PC-9 (cell line): ENCODE measurements at regions of chr22 and their contacts with region 1.

Region 1: GRCh38 chr22:36585841-36586240 is 56.9 kb upstream of the EIF3D start:
- DNase-seq: peak; percentile 76 to 81
- H3K4me3 ChIP-seq: no peak overlapping the region
- H3K27ac ChIP-seq: peak overlapping the region; percentile 16
- H3K4me1 ChIP-seq: peaks cover 19% of the 10 kb centered on the region
- H3K27me3 ChIP-seq: peaks cover 20% of the 10 kb centered on the region
- CTCF ChIP-seq: no peak

Region 2: GRCh38 chr22:36221799-36222751 is 363.8 kb before region 1 on chr22:
- CTCF ChIA-PET with region 1: no interaction called
- POLR2A ChIA-PET with region 1: no interaction called
- intact Hi-C with region 1: no loop called
- DNase-seq: peak in 1 of 2 experiments; percentile 52
- H3K4me3 ChIP-seq: no peak overlapping the region
- H3K27ac ChIP-seq: no peak overlapping the region
- H3K4me1 ChIP-seq: no peaks in the 10 kb centered on the region
- H3K27me3 ChIP-seq: no peaks in the 10 kb centered on the region; the same call in 1 of the 2 replicates
- CTCF ChIP-seq: peak; percentile 74

Region 3: GRCh38 chr22:36552289-36552688 is 33.6 kb before region 1 on chr22:
- CTCF ChIA-PET with region 1: interaction called, 11 read pairs
- POLR2A ChIA-PET with region 1: interaction called, 3 read pairs
- intact Hi-C with region 1: loop called (anchors 1 kb)
- DNase-seq: no peak
- H3K4me3 ChIP-seq: no peak overlapping the region
- H3K27ac ChIP-seq: no peak overlapping the region
- H3K4me1 ChIP-seq: peaks cover 4% of the 10 kb centered on the region
- H3K27me3 ChIP-seq: peaks cover 20% of the 10 kb centered on the region
- CTCF ChIP-seq: no peak

Region 4: GRCh38 chr22:36619797-36620399 is 34.1 kb after region 1 on chr22:
- CTCF ChIA-PET with region 1: no interaction called
- POLR2A ChIA-PET with region 1: no interaction called
- intact Hi-C with region 1: no loop called
- DNase-seq: no peak
- H3K4me3 ChIP-seq: no peak overlapping the region
- H3K27ac ChIP-seq: no peak overlapping the region
- H3K4me1 ChIP-seq: no peaks in the 10 kb centered on the region
- H3K27me3 ChIP-seq: peaks cover 94% of the 10 kb centered on the region
- CTCF ChIP-seq: no peak

Region 5: DNA sequence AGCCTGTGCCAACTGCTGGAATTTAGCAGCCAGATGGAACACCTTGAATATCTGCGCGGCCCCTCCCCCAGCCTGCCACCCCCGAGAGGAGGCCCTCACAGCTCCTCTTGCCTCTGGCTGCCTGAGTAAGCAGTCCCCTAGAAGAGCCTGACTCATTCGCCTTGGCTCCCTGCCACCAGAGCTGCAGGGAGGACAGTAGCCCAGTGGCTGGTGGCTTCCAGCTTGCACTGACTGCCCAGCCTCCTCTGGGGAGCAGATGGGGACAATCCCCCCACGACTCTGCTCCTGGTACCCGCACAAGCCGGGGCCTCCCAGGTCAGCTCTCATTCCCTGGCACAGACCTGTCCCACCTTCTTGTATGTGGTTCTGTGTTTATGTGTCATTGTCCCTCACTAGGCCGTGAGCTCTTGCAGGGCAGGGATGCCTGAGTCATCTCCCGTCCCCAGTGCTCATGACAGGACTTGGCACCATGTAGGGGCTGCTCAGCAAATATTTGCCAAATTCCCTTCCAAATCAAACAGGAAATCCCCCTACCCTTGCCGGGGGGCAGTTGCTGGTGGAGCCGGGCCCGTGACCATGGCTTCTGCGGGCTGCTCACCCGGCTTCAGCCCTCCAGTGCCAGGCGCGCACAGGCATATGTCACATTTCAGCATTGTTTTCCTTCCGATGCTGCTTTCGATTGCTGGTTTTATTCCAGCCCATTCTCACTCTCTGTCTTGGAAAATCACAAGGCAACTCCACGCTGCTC is 74.1 kb after region 1 on chr22:
- CTCF ChIA-PET with region 1: no interaction called
- POLR2A ChIA-PET with region 1: interaction called, 7 read pairs
- intact Hi-C with region 1: loop called (anchors 1 kb)
- DNase-seq: peak; percentile 98 to 99
- H3K4me3 ChIP-seq: peak overlapping the region; percentile 48
- H3K27ac ChIP-seq: peak overlapping the region; percentile 79
- H3K4me1 ChIP-seq: peaks cover 28% of the 10 kb centered on the region
- H3K27me3 ChIP-seq: no peaks in the 10 kb centered on the region
- CTCF ChIP-seq: no peak